HCT116 (cell line): ENCODE measurements at regions of chr11 and their contacts with region 1.

Region 1: DNA sequence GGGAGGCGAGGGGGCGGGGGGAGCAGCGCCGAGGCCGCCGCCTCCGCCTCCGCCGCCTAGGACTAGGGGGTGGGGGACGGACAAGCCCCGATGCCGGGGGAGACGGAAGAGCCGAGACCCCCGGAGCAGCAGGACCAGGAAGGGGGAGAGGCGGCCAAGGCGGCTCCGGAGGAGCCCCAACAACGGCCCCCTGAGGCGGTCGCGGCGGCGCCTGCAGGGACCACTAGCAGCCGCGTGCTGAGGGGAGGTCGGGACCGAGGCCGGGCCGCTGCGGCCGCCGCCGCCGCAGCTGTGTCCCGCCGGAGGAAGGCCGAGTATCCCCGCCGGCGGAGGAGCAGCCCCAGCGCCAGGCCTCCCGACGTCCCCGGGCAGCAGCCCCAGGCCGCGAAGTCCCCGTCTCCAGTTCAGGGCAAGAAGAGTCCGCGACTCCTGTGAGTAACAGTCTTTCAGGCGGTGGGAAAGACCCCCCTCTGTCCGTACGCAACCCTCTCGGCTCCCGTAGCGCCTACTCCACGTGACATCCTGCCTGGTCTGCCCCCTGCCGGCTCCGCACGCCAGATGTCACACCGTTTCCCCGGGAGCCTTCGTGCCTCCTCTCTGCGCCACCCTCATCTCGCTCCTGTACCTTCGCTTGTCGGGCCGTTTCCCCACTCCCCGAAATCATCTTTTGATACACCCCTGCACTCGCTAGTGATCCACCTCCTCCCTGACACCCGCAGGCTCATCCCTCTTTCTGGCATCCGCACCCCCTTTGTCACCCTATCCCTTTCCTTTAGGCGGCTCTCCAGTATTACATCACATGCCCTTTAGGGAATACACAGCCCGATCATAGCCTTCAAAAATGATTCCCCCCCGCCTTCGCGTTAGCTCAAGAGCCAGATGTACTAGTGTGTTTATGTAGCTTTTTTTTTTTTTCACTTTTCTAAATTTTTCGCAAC is 598 bp downstream of the ZFP91 start:
- DNase-seq: peak; percentile 78
- ATAC-seq: peak; percentile 57
- H3K4me3 ChIP-seq: peak overlapping the region; percentile 78 to 88
- H3K27ac ChIP-seq: peak overlapping the region; percentile 97
- H3K4me1 ChIP-seq: peaks cover 15 to 23% of the 10 kb centered on the region in 2 experiments
- H3K27me3 ChIP-seq: no peaks in the 10 kb centered on the region
- CTCF ChIP-seq: peak; percentile 28 to 77 (median 66); a peak in 5 of 6 replicates
- POLR2A ChIP-seq: peak; percentile 37
- RAD21 ChIP-seq: no peak

Region 2: DNA sequence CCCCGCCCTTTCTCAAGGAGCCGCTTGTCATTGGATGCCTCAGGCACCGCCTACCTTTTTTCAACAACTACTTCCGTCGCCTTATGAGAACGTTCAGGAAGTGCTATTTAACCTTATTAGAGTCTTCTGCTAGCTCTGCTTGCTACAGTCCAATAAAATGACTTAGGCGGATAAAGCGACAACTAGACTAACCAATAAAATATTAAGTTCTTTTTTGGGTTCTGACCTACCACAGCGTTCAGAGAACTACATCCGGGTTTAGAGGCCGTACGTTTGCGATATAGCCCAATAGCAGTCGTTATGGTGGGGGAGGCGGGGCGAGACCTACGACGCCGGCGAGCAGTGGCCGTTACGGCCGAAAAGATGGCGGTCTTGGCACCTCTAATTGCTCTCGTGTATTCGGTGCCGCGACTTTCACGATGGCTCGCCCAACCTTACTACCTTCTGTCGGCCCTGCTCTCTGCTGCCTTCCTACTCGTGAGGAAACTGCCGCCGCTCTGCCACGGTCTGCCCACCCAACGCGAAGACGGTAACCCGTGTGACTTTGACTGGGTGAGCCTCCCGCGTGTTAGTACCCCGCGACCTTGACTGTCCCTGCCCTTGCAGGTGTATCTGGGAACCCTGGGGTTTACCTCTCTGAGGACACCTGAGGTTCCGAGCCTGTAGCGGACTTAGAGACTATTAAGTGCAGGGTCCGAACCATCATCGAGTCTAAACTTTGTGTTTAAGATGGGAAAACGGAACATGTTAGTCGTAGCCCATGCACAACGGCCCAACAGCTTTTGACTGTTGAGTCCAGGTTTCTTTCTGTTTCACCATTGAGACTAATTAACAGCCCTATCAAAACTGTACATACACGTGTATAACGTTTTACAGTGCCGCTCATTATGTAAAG is 867.0 kb before region 1 on chr11 and contains the start of gene TMX2:
- CTCF ChIA-PET with region 1: no interaction called
- POLR2A ChIA-PET with region 1: no interaction called
- RAD21 ChIA-PET with region 1: no interaction called
- intact Hi-C with region 1: loop called (anchors 5 kb)
- DNase-seq: peak; percentile 99
- ATAC-seq: peak; percentile 85
- H3K4me3 ChIP-seq: peak within 1 kb of the TSS; percentile 91 to 98
- H3K27ac ChIP-seq: peak within 1 kb of the TSS; percentile 86
- H3K4me1 ChIP-seq: peaks cover 18 to 22% of the 10 kb centered on the region in 2 experiments
- H3K27me3 ChIP-seq: no peaks in the 10 kb centered on the region
- CTCF ChIP-seq: no peak
- POLR2A ChIP-seq: peak; percentile 2
- RAD21 ChIP-seq: no peak
- total RNA-seq, gene TMX2: 93.9 TPM

Region 3: GRCh38 chr11:58616594-58616993 is 37.1 kb after region 1 on chr11:
- CTCF ChIA-PET with region 1: no interaction called
- POLR2A ChIA-PET with region 1: no interaction called
- RAD21 ChIA-PET with region 1: no interaction called
- intact Hi-C with region 1: loop called (anchors 5 kb)
- DNase-seq: no peak
- ATAC-seq: no peak
- H3K4me3 ChIP-seq: no peak overlapping the region
- H3K27ac ChIP-seq: no peak overlapping the region
- H3K4me1 ChIP-seq: no peaks in the 10 kb centered on the region
- H3K27me3 ChIP-seq: no peaks in the 10 kb centered on the region
- CTCF ChIP-seq: no peak
- POLR2A ChIP-seq: no peak
- RAD21 ChIP-seq: no peak

Region 4: DNA sequence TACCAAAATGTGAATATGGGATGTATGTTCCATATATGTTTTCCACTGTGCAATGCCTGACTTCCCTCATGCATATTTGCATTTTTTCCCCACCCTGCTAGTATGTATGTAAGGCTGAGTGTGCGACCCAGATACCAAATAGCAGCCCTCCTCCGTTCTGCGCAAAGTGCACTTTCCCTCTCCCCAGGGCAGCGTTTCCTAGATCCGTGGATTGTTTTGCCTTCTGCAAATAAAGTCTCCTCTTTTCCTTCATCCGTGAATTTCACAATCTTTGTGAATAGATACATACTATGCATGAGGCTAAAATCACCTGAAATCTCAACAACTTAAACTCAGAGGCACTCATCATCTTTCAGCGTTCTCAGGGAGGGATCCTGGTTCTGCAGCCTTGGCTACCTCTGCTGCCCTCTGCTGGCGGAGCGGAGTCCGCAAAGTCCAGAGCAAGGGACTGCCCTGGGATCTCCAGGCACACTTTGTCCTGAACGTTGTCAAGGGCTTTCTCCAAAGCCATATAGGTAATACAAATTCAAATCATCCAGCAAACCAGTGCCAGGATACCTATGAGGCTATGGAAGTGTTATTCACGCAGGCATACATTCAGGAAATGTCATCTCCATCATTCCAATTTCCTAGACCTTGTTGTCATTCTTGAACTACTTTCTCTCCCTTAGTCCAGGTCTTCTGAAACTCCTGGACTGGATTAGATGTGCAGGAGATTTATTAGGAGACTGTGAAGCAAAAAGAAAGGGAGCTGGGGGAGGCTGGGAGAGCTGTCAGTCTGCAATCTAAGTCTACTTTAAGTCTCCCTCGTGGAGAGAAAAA is 96.1 kb after region 1 on chr11:
- CTCF ChIA-PET with region 1: interaction called, 4 read pairs
- POLR2A ChIA-PET with region 1: no interaction called
- RAD21 ChIA-PET with region 1: no interaction called
- intact Hi-C with region 1: loop called (anchors 2 kb)
- DNase-seq: peak; percentile 51
- ATAC-seq: peak; percentile 99
- H3K4me3 ChIP-seq: no peak overlapping the region
- H3K27ac ChIP-seq: no peak overlapping the region
- H3K4me1 ChIP-seq: no peaks in the 10 kb centered on the region; a peak in 1 of 4 replicates
- H3K27me3 ChIP-seq: no peaks in the 10 kb centered on the region
- CTCF ChIP-seq: peak; percentile 84 to 98 (median 97)
- POLR2A ChIP-seq: no peak
- RAD21 ChIP-seq: peak; percentile 76

Region 5: DNA sequence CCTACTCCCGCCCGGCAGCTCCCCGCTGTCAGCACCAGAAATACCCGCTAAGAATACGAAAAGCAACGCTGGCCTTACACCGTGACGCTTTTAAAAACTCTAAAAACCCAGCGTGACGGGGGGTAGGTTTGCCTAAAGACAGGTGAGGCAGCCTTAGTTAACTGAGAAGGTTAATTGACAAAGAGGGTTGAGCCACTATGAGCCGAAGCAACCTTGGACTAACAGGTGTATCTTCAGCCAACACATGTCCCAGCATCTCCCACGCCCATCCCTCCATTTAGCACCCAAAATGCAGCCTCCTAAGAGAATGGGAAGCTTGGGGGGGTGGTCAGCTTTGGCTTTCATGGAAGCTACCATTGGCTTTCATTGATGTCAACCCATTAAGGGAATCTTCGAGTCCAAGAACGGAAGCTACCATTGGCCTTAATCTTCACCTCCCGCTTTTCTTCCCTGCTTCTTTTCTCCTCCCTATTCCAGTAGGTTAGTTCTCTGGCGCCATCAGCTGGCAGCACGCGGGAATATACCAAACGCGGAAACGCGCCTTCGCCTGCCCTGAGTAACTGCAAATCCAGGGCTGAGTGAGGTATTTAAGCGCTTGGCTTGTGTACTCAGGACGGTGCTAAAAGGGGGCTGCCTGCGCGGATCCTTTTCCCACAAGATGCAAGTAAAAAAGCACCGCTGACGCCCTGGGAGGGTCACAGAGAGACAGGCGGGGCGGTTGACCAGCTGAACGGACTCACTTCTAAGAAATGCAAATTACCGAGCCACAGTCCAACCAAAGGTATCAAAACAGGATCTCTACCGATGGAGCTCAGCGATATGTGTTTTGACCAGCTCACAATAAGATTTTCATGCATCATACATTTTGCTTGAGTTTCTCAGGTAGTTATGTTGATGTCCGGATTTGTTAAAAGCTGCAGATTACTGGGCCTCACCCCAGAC is 321.3 kb after region 1 on chr11:
- CTCF ChIA-PET with region 1: interaction called, 3 read pairs
- POLR2A ChIA-PET with region 1: no interaction called
- RAD21 ChIA-PET with region 1: no interaction called
- intact Hi-C with region 1: loop called (anchors 5 kb)
- DNase-seq: peak; percentile 80
- ATAC-seq: peak; percentile 99
- H3K4me3 ChIP-seq: no peak overlapping the region
- H3K27ac ChIP-seq: no peak overlapping the region
- H3K4me1 ChIP-seq: no peaks in the 10 kb centered on the region
- H3K27me3 ChIP-seq: no peaks in the 10 kb centered on the region
- CTCF ChIP-seq: peak; percentile 71 to 79 (median 78); a peak in 5 of 6 replicates
- POLR2A ChIP-seq: no peak
- RAD21 ChIP-seq: peak; percentile 83

Region 6: DNA sequence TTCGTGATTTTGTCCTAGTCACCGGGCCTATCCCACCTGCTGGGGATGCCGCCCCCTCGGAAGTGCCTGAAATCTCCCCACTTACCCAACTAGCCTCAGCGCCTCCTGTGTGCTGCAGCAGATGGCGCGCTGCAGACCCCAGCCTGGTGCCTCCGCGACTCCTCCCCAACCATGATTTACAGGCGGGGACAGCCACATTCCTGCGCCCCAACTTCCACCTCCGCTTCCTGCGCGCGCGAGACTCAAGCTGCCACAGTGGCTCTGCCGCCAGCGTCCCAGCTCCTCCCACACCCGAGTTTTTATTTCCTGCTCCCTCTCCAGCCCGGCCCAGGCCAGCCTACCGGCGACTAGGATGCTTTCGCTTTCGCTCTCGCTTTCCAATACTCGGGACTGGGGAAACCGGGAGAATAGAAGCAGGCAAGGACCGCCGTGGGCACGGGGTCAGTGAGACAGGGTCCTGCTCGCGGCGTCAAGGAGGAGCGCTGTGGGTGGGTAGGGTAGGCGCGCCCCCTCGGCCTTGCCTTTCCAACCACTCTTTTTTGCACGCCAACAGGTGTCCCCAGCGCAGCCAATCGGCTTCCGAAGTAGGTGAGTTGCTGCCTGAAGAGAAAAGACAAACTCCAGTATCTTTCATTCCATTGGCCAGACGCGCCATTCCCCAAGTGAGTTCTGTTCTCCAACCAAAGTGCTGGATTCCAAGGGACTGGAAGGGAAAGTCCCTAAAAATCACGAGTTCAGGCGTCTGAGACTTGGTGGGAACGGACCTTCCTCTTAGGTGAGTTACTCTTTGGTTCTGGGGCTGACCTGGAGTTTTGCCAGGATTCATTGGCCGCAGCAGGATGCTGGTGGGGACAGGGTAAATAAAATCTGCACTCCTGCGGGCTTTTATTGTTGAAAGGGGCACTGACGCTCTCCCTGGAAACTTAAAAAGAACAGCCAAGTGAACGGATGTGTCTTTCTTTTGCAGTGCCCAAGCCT is 563.4 kb after region 1 on chr11 and contains the start of gene FAM111A:
- CTCF ChIA-PET with region 1: no interaction called
- POLR2A ChIA-PET with region 1: no interaction called
- RAD21 ChIA-PET with region 1: no interaction called
- intact Hi-C with region 1: loop called (anchors 5 kb)
- DNase-seq: peak; percentile 83
- ATAC-seq: peak; percentile 85
- H3K4me3 ChIP-seq: peak within 1 kb of the TSS; percentile 51 to 79
- H3K27ac ChIP-seq: peak within 1 kb of the TSS; percentile 67
- H3K4me1 ChIP-seq: peaks cover 15 to 34% of the 10 kb centered on the region in 2 experiments
- H3K27me3 ChIP-seq: no peaks in the 10 kb centered on the region
- CTCF ChIP-seq: peak in 2 of 3 experiments; percentile 9 to 21; a peak in 1 of 6 replicates
- POLR2A ChIP-seq: no peak
- RAD21 ChIP-seq: no peak
- total RNA-seq, gene FAM111A: 30.3 TPM